Activated B cell treated with CpG ODN at 0.5 μM for 24 hours (primary cell): ENCODE measurements at regions of chr2 and their contacts with region 1.

Region 1: GRCh38 chr2:63861220-63861822 is 19.6 kb downstream of the UGP2 start:
- DNase-seq: no peak
- ATAC-seq: peak; percentile 70
- H3K4me3 Mint-ChIP-seq: no peak overlapping the region
- H3K27ac Mint-ChIP-seq: no peak overlapping the region
- H3K4me1 Mint-ChIP-seq: peaks cover 8% of the 10 kb centered on the region
- H3K27me3 Mint-ChIP-seq: no peaks in the 10 kb centered on the region
- CTCF ChIP-seq: no peak

Region 2: GRCh38 chr2:62787386-62787785 is 1073.9 kb before region 1 on chr2:
- CTCF ChIA-PET with region 1: no interaction called
- POLR2A ChIA-PET with region 1: no interaction called
- intact Hi-C with region 1: loop called (anchors 2 kb)
- DNase-seq: no peak
- ATAC-seq: no peak
- H3K4me3 Mint-ChIP-seq: no peak overlapping the region
- H3K27ac Mint-ChIP-seq: no peak overlapping the region
- H3K4me1 Mint-ChIP-seq: no peaks in the 10 kb centered on the region
- H3K27me3 Mint-ChIP-seq: no peaks in the 10 kb centered on the region
- CTCF ChIP-seq: no peak

Region 3: GRCh38 chr2:63692002-63692606 is 169.2 kb before region 1 on chr2:
- CTCF ChIA-PET with region 1: interaction called, 101 read pairs
- POLR2A ChIA-PET with region 1: no interaction called
- intact Hi-C with region 1: loop called (anchors 1 kb)
- DNase-seq: no peak
- ATAC-seq: peak; percentile 18
- H3K4me3 Mint-ChIP-seq: no peak overlapping the region
- H3K27ac Mint-ChIP-seq: no peak overlapping the region
- H3K4me1 Mint-ChIP-seq: no peaks in the 10 kb centered on the region
- H3K27me3 Mint-ChIP-seq: no peaks in the 10 kb centered on the region
- CTCF ChIP-seq: peak; percentile 53

Region 4: DNA sequence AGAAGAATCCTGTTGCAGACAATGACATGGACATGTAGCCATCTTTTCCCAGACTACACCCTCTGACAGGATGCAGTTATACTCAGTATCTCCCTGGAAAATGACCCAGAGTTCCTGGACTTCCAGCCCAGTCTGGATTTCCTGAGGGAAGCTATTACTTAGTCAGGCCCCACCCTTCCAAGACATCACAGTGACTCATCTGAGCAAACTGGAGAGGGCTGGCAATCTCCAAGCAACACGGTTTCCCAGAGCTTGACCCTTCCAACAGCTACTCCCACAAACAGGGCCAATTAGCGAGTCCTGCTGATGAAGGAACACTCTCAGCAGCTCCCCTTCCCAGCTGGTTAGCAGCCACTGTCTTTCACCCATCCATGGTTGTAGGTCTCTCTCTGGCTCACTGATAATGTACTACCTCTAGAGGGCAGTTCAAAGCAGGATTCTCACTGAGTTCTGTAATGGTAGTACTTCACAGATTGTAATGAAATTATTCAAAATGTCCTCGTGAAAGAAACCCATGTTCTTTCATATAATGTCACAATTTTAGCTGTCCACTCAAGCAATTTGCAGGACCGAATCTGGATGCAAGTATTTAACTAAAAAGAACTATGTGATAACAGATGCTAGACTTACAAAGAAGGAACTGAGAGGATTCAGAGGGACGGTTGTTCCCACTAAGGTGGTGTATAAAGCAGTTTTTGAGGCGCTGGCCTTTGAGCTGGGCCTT is 162.3 kb before region 1 on chr2:
- CTCF ChIA-PET with region 1: interaction called, 101 read pairs
- POLR2A ChIA-PET with region 1: no interaction called
- intact Hi-C with region 1: loop called (anchors 1 kb)
- DNase-seq: no peak
- ATAC-seq: peak; percentile 64
- H3K4me3 Mint-ChIP-seq: no peak overlapping the region
- H3K27ac Mint-ChIP-seq: no peak overlapping the region
- H3K4me1 Mint-ChIP-seq: no peaks in the 10 kb centered on the region
- H3K27me3 Mint-ChIP-seq: no peaks in the 10 kb centered on the region
- CTCF ChIP-seq: no peak

Region 5: GRCh38 chr2:63849381-63850203 is 11.7 kb before region 1 on chr2:
- CTCF ChIA-PET with region 1: interaction called, 11 read pairs
- POLR2A ChIA-PET with region 1: no interaction called
- intact Hi-C with region 1: no loop called
- DNase-seq: no peak
- ATAC-seq: no peak
- H3K4me3 Mint-ChIP-seq: no peak overlapping the region
- H3K27ac Mint-ChIP-seq: no peak overlapping the region
- H3K4me1 Mint-ChIP-seq: peaks cover 65% of the 10 kb centered on the region
- H3K27me3 Mint-ChIP-seq: no peaks in the 10 kb centered on the region
- CTCF ChIP-seq: no peak

Region 6: DNA sequence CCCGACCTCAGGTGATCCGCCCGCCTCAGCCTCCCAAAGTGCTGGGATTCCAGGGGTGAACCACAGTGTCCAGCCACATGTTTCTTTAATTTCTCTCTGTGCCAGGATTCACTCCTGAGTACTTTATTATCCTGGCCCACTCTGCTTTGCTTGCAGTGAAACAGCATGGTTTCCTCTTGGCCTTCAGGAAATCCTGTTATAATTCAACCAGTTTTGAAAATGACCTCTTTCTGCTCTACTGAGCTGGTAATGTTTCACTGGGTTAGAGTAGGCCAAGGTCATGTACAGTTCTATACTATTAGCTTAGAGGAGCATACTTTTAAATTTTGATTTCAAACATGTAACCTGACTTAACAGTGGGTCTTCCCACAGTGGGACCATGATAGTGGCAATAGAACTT is 373.5 kb after region 1 on chr2:
- CTCF ChIA-PET with region 1: no interaction called
- POLR2A ChIA-PET with region 1: no interaction called
- intact Hi-C with region 1: no loop called
- DNase-seq: no peak
- ATAC-seq: no peak
- H3K4me3 Mint-ChIP-seq: no peak overlapping the region
- H3K27ac Mint-ChIP-seq: no peak overlapping the region
- H3K4me1 Mint-ChIP-seq: peaks cover 10% of the 10 kb centered on the region
- H3K27me3 Mint-ChIP-seq: no peaks in the 10 kb centered on the region
- CTCF ChIP-seq: no peak